ENCODE measurements at regions of chr2 and their contacts with region 1.

Region 1: DNA sequence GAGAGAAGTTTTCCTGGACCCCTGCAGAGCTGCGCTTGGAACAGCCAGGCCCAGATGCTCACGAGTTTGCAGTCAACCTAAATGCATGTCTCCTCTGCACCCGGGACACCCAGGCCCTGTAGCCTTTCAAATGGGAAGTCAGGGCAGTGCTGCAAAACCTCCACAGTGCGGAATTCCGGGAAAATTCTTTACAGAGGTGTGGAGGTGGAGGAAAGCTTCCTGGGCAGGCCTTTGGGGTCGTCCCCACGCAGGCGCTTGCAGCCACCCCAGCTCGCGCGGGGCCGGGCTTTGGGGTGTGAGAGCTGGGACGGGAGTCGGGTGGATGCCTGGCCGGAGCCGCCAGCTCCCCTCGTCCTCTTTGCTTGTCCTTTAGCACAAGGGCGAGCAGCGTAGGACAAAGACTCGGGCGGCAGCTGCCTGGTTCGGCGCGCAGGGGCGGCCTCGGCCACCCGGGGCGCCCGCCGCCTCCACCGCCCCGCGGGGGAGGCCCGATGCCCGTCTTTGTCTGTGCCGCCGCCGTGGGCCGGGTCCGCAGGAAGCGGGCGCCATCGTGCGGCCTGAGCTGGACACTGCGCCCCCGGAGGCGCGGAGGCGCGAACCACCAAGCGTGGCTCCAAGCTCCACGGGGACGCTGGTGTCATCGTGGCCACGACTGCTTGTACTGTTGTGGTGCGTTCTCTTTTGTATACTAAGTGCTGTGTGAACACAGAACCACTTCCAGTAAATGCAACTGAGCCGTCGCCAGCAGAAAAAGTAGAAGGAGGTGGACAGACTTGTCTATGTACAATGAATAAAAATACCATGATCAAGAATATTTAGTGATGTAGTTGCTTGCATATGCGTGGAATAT is 28.2 kb upstream of the BCL11A start:
- DNase-seq: peak; percentile 5
- H3K4me3 ChIP-seq: peak overlapping the region; percentile 28 to 62 (median 44)
- H3K27ac ChIP-seq: no peak overlapping the region
- H3K4me1 ChIP-seq: peaks cover 0 to 21% (median 0%) of the 10 kb centered on the region in 3 donors
- H3K27me3 ChIP-seq: peaks cover 0 to 52% (median 0%) of the 10 kb centered on the region in 4 donors
- CTCF ChIP-seq: peak; percentile 80 to 97 (median 88)
- POLR2A ChIP-seq: no peak

Region 2: DNA sequence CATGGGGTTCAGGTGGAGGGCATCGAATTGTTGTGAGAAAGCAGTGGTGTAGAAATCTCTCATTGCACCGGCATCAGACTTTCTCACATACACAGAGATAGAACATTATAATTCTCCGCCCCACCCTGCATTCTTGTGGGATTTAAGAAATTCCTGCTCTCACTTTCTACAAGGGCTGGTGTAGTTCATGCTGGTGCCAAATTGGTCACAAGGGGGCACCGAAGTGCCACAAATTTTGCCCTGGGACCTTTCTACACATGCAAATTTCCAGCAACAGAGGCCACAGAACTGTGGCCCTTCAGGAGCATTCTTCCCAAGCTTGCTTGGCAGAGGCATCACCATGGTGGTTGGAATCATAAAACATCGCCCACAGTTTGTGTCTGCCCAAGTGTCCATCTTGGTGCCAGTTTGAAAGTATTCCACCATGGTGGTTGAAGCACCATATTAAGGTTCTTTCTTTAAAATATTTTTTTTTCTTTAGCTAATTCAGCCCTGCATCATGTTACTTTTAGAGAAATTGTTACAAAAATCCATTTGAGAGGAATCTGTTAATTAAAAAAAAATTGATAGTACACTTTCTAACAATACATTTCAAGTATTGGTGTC is 1819.4 kb before region 1 on chr2:
- intact Hi-C with region 1: loop called (anchors 10 kb)
- DNase-seq: no peak
- H3K4me3 ChIP-seq: no peak overlapping the region
- H3K27ac ChIP-seq: no peak overlapping the region
- H3K4me1 ChIP-seq: no peaks in the 10 kb centered on the region
- H3K27me3 ChIP-seq: peaks cover 0 to 6% (median 0%) of the 10 kb centered on the region in 4 donors
- CTCF ChIP-seq: peak in 4 of 6 experiments; percentile 7 to 59 (median 42)
- POLR2A ChIP-seq: no peak

Region 3: DNA sequence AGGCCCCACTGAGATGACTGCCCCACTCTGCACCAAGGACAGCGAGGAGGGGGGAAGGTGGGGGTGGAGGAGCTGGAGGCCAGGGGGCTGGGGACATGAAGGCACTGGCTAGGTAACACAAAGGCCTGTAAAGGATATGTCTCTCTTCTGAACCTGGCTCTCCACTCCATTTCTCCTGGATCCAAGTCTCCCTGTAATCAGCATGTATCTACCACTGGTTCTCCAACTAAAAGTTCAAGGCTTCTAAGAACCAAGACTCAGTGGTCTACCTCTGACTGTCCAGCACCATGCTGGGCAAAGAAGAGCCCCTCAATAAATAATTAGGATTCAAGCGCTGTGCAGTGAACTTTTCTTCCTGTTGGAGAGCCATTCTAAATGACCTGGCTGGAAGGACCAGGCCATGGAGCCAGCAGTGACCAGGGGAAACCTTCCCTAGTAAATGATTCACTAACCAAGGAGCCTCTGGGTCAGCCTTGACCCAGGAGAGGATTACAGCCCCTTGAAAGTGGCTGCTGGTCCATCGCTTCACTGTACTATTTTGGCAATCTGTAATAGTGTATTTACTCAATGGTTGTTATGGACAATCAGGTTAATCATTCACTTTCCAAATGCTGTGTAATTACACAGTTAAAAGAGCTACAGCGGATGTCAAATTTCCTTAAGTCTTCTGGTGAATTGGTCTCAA is 101.4 kb before region 1 on chr2:
- intact Hi-C with region 1: no loop called
- DNase-seq: no peak
- H3K4me3 ChIP-seq: no peak overlapping the region
- H3K27ac ChIP-seq: peak overlapping the region; percentile 66 to 95 (median 86)
- H3K4me1 ChIP-seq: peaks cover 12 to 92% (median 20%) of the 10 kb centered on the region in 3 donors
- H3K27me3 ChIP-seq: no peaks in the 10 kb centered on the region
- CTCF ChIP-seq: no peak
- POLR2A ChIP-seq: no peak

Measured in esophagus squamous epithelium (tissue), 5 donors.